ENCODE measurements at regions of chr11 and their contacts with region 1.

Region 1: GRCh38 chr11:36746886-36747710 is 149.1 kb upstream of the RAG2 start:
- DNase-seq: peak; percentile 74 to 94 (median 81)
- ATAC-seq: peak; percentile 100
- H3K4me3 ChIP-seq: no peak overlapping the region
- H3K27ac ChIP-seq: no peak overlapping the region
- H3K4me1 ChIP-seq: peaks cover 0 to 4% of the 10 kb centered on the region in 2 donors
- H3K27me3 ChIP-seq: peaks cover 0 to 14% of the 10 kb centered on the region in 2 donors
- CTCF ChIP-seq: peak; percentile 94

Region 2: DNA sequence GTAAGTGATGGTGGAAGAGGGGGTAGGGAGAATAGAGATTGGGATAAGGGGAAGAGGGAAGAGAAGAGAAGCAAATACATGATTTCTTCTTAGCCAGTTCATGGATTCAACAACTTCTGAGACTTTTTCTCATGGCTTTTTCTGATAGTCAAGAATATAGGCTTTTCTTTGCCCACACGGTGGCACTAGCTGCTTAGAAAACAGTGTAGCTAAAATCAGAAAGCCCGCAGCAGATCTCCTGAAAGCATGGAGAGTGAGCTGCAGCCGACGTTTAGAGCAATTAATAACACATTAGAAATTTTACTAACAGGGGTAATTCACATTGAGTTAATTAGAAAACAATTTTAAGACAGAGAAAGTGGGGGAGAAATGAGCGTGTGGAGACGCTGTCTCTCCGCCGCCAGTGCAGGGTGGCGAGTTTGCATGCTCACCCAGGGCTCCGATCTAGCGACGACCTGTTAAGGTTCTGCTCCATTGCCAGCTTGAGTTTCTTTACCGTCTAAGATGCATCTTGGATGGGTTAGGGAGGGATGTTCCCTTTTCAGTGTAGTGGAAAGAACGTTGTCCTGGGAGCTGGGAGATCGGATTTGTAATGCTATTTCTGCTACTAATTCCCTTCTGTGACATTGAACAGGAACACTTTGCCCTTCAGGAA is 182.6 kb before region 1 on chr11:
- intact Hi-C with region 1: loop called in 1 of 2 experiments (anchors 10 kb)
- DNase-seq: peak in 2 of 4 donors; percentile 67 to 77
- ATAC-seq: peak; percentile 91
- H3K4me3 ChIP-seq: peak overlapping the region in 1 of 2 donors; percentile 5
- H3K27ac ChIP-seq: no peak overlapping the region
- H3K4me1 ChIP-seq: peaks cover 0 to 3% of the 10 kb centered on the region in 2 donors
- H3K27me3 ChIP-seq: peaks cover 0 to 4% of the 10 kb centered on the region in 2 donors
- CTCF ChIP-seq: peak; percentile 20 to 35

Region 3: DNA sequence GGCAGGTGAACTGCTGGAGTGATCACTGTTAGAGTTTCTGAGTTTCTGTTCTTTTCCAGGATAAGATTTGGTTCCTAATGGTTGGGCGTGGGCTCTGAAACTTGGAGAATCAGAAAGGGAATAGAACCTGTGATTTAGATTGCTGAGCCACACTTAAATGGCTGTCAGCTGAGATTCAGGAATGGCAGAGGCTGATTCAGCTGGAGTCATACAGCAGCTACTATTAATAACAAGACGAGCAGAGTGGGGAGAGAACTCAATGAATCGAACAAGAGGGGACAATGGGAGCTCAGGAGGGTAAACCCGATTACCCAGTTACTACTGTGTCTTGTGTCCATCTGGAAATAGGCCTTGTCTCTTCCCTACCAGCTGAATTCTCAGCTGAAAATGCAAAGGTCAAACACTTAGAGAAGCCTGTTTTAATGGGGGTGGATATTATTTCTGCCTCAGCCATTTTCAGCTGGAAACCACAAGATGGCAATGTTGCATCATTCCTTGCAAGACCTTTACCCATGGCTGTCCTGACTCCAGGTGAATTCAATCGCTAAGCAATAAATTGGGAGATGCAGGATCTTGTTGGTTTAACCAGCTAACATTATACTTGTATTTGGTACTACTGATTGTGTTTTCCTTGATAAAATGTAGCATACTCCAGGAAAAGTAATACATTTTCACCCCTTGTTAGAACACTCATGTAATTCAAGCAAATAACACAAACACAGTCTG is 44.6 kb before region 1 on chr11:
- intact Hi-C with region 1: loop called in 1 of 2 experiments (anchors 5 kb)
- DNase-seq: peak in 2 of 4 donors; percentile 64 to 76
- ATAC-seq: peak; percentile 84
- H3K4me3 ChIP-seq: no peak overlapping the region
- H3K27ac ChIP-seq: no peak overlapping the region
- H3K4me1 ChIP-seq: no peaks in the 10 kb centered on the region
- H3K27me3 ChIP-seq: no peaks in the 10 kb centered on the region
- CTCF ChIP-seq: peak; percentile 41 to 61